ENCODE measurements at regions of chr14 and their contacts with region 1.

Region 1: GRCh38 chr14:22570132-22570949 is 18.7 kb downstream of the DAD1 start:
- DNase-seq: peak; percentile 69 to 99 (median 85)
- ATAC-seq: peak; percentile 87
- H3K4me3 ChIP-seq: peak overlapping the region; percentile 34 to 38
- H3K4me3 Mint-ChIP-seq: peak overlapping the region; percentile 73
- H3K27ac ChIP-seq: peak overlapping the region; percentile 58 to 97
- H3K27ac Mint-ChIP-seq: peak overlapping the region; percentile 97
- H3K4me1 ChIP-seq: peaks cover 51% of the 10 kb centered on the region
- H3K4me1 Mint-ChIP-seq: peaks cover 54% of the 10 kb centered on the region
- H3K27me3 ChIP-seq: no peaks in the 10 kb centered on the region
- H3K27me3 Mint-ChIP-seq: no peaks in the 10 kb centered on the region
- CTCF ChIP-seq: peak; percentile 99

Region 2: GRCh38 chr14:21978184-21978998 is 592.0 kb before region 1 on chr14:
- CTCF ChIA-PET with region 1: interaction called, 11 read pairs
- POLR2A ChIA-PET with region 1: interaction called, 6 read pairs
- intact Hi-C with region 1: no loop called
- DNase-seq: peak in 8 of 9 experiments; percentile 26 to 78 (median 58)
- ATAC-seq: peak; percentile 79
- H3K4me3 ChIP-seq: peak overlapping the region in 1 of 2 experiments; percentile 15
- H3K4me3 Mint-ChIP-seq: peak overlapping the region; percentile 71
- H3K27ac ChIP-seq: no peak overlapping the region
- H3K27ac Mint-ChIP-seq: peak overlapping the region; percentile 72
- H3K4me1 ChIP-seq: peaks cover 3% of the 10 kb centered on the region
- H3K4me1 Mint-ChIP-seq: peaks cover 17% of the 10 kb centered on the region
- H3K27me3 ChIP-seq: no peaks in the 10 kb centered on the region
- H3K27me3 Mint-ChIP-seq: no peaks in the 10 kb centered on the region
- CTCF ChIP-seq: peak; percentile 74

Region 3: DNA sequence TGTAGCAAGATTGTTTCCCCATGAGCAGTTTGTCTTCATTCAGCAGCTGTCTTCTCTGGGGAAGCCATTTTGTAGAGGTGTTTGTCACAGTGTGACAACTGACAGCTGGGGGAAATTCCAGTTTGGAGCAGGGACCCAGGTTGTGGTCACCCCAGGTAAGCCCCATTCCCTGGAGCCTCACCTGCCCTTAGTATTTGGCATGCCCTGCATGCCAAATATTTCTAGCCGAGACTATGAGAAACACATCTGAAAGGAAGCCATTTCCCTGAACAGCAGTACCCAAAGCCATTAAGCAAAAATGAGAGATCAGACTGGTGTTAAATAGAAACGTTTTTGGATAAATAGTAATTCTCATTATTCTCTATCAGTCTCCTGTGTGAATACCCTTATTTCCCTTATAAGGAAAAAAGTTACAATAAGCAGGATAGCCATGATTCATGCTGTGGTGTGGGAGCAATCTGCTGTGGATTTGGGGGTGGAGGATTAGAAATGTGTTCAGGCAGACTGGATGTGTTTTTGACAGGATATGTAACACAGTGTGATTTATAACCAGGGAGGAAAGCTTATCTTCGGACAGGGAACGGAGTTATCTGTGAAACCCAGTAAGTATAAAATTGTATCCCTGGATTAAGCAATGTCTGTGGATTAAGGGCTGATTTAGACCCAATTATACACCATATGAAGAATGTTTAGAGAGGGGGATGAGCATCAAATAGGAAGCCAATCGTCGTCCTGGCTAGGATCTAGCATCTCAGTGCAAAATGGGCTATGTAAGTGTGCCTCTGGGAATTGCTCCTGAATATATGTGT is 50.3 kb before region 1 on chr14:
- CTCF ChIA-PET with region 1: interaction called, 22 read pairs
- POLR2A ChIA-PET with region 1: interaction called, 11 read pairs
- intact Hi-C with region 1: no loop called
- DNase-seq: peak in 2 of 9 experiments; percentile 37 to 57
- ATAC-seq: peak; percentile 21
- H3K4me3 ChIP-seq: peak overlapping the region; percentile 47 to 61
- H3K4me3 Mint-ChIP-seq: peak overlapping the region; percentile 86
- H3K27ac ChIP-seq: peak overlapping the region; percentile 58 to 86
- H3K27ac Mint-ChIP-seq: peak overlapping the region; percentile 99
- H3K4me1 ChIP-seq: peaks cover 94% of the 10 kb centered on the region
- H3K4me1 Mint-ChIP-seq: peaks cover 93% of the 10 kb centered on the region
- H3K27me3 ChIP-seq: no peaks in the 10 kb centered on the region
- H3K27me3 Mint-ChIP-seq: no peaks in the 10 kb centered on the region
- CTCF ChIP-seq: no peak

Region 4: GRCh38 chr14:22589096-22589839 is 18.9 kb after region 1 on chr14 and contains the start of gene DAD1:
- CTCF ChIA-PET with region 1: interaction called, 105 read pairs
- POLR2A ChIA-PET with region 1: interaction called, 32 read pairs
- intact Hi-C with region 1: loop called (anchors 1 kb)
- DNase-seq: peak; percentile 99 to 100 (median 100)
- ATAC-seq: peak; percentile 86
- H3K4me3 ChIP-seq: peak within 1 kb of the TSS; percentile 64 to 67
- H3K4me3 Mint-ChIP-seq: peak within 1 kb of the TSS; percentile 98
- H3K27ac ChIP-seq: peak within 1 kb of the TSS; percentile 95 to 99
- H3K27ac Mint-ChIP-seq: peak within 1 kb of the TSS; percentile 100
- H3K4me1 ChIP-seq: peaks cover 47% of the 10 kb centered on the region
- H3K4me1 Mint-ChIP-seq: peaks cover 49% of the 10 kb centered on the region
- H3K27me3 ChIP-seq: no peaks in the 10 kb centered on the region
- H3K27me3 Mint-ChIP-seq: no peaks in the 10 kb centered on the region
- CTCF ChIP-seq: no peak
- total RNA-seq, gene DAD1: 27.2 to 35.6 TPM

Region 5: DNA sequence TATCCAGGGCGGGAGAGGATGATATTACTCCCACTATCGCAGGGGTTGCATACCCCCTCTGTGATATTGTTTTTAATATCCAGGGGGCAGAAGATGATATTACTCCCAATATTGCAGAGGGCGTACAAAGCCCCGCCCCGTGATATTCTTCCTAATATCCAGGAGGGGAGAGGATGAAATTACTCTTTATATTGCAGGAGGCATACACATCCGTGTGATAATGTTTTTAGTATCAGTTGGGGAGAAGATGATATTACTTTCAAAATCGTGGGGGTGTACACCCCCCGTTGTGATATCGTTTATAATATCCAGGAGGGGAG is 143.2 kb after region 1 on chr14:
- CTCF ChIA-PET with region 1: no interaction called
- POLR2A ChIA-PET with region 1: no interaction called
- intact Hi-C with region 1: loop called (anchors 1 to 5 kb)
- DNase-seq: no peak
- ATAC-seq: no peak
- H3K4me3 ChIP-seq: peak overlapping the region; percentile 7 to 49
- H3K4me3 Mint-ChIP-seq: peak overlapping the region; percentile 85
- H3K27ac ChIP-seq: no peak overlapping the region
- H3K27ac Mint-ChIP-seq: no peak overlapping the region
- H3K4me1 ChIP-seq: peaks cover 9% of the 10 kb centered on the region
- H3K4me1 Mint-ChIP-seq: peaks cover 11% of the 10 kb centered on the region
- H3K27me3 ChIP-seq: peaks cover 0 to 7% of the 10 kb centered on the region in 2 experiments
- H3K27me3 Mint-ChIP-seq: peaks cover 31% of the 10 kb centered on the region
- CTCF ChIP-seq: no peak

Region 6: DNA sequence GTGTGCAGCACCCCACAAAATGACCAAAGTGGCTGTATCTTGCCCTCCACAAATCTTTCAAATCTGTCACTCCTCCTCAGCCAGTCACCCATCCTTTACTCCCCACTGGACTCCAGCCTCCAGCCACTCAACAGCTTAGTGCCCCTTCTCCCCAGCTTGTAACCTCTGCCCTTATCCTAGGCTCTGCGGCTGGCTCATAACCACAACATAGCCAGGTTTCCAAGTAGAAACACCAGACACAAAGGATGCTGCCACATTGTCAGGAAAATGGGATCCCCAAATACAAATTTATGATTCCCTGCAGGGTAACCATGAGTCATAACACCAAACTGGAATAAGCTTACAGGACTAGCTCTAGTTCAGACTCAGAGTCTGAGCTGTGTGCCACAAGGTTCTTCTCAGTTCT is 211.2 kb after region 1 on chr14:
- CTCF ChIA-PET with region 1: no interaction called
- POLR2A ChIA-PET with region 1: no interaction called
- intact Hi-C with region 1: no loop called
- DNase-seq: no peak
- ATAC-seq: no peak
- H3K4me3 ChIP-seq: no peak overlapping the region
- H3K4me3 Mint-ChIP-seq: no peak overlapping the region
- H3K27ac ChIP-seq: no peak overlapping the region
- H3K27ac Mint-ChIP-seq: no peak overlapping the region
- H3K4me1 ChIP-seq: no peaks in the 10 kb centered on the region
- H3K4me1 Mint-ChIP-seq: no peaks in the 10 kb centered on the region
- H3K27me3 ChIP-seq: no peaks in the 10 kb centered on the region
- H3K27me3 Mint-ChIP-seq: no peaks in the 10 kb centered on the region
- CTCF ChIP-seq: no peak

Region 7: DNA sequence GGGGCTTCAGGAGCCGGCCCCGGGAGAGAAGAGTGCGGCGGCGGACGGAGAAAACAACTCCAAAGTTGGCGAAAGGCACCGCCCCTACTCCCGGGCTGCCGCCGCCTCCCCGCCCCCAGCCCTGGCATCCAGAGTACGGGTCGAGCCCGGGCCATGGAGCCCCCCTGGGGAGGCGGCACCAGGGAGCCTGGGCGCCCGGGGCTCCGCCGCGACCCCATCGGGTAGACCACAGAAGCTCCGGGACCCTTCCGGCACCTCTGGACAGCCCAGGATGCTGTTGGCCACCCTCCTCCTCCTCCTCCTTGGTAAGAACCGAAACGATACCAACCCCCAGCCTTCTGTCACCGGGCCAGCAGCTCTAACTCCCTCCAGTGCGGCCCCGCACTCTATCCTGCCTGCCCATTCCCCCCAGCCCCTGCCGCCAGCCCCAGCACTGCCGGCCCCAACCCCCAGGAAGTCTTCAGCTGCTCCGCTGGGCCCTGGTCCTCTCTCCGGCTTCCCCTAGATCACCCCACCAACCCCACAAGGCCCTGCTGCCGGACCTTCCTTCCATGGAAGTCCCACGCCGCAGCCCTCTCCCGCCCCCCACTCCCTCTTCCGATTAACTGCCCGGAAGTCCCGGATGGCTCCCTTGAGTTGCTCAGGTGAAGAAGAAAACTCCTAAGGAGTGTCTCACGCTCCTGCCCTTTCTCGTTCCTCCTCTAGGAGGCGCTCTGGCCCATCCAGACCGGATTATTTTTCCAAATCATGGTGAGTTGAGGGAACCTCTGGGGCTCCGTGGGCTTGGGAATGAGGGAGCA is 301.9 kb after region 1 on chr14:
- CTCF ChIA-PET with region 1: interaction called, 16 read pairs
- POLR2A ChIA-PET with region 1: interaction called, 7 read pairs
- intact Hi-C with region 1: no loop called
- DNase-seq: peak; percentile 47 to 82 (median 73)
- ATAC-seq: peak; percentile 46
- H3K4me3 ChIP-seq: peak overlapping the region; percentile 82 to 83
- H3K4me3 Mint-ChIP-seq: peak overlapping the region; percentile 91
- H3K27ac ChIP-seq: peak overlapping the region; percentile 85 to 94
- H3K27ac Mint-ChIP-seq: peak overlapping the region; percentile 99
- H3K4me1 ChIP-seq: peaks cover 28% of the 10 kb centered on the region
- H3K4me1 Mint-ChIP-seq: peaks cover 36% of the 10 kb centered on the region
- H3K27me3 ChIP-seq: no peaks in the 10 kb centered on the region
- H3K27me3 Mint-ChIP-seq: no peaks in the 10 kb centered on the region
- CTCF ChIP-seq: peak; percentile 86

Region 8: DNA sequence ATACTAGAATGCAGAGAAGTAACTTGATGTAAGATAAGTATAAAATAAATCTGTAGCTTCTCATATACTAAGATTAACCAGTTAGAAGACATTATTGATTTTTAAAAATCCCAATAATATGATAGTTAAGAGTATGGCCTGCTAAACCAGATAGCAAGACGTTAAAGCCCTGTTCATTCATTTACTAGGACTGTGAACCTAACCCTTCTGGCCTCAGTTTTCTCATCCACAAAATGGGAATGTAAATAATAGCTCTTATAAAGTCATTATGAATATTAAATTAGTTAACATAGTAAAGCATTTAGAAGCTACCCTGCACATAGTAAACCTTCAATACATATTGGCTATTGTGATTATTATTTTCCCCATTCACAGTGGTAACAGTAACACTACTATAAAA is 364.8 kb after region 1 on chr14:
- CTCF ChIA-PET with region 1: no interaction called
- POLR2A ChIA-PET with region 1: no interaction called
- intact Hi-C with region 1: no loop called
- DNase-seq: no peak
- ATAC-seq: no peak
- H3K4me3 ChIP-seq: no peak overlapping the region
- H3K4me3 Mint-ChIP-seq: no peak overlapping the region
- H3K27ac ChIP-seq: no peak overlapping the region
- H3K27ac Mint-ChIP-seq: no peak overlapping the region
- H3K4me1 ChIP-seq: no peaks in the 10 kb centered on the region
- H3K4me1 Mint-ChIP-seq: peaks cover 15% of the 10 kb centered on the region
- H3K27me3 ChIP-seq: no peaks in the 10 kb centered on the region
- H3K27me3 Mint-ChIP-seq: no peaks in the 10 kb centered on the region
- CTCF ChIP-seq: no peak

Measured in CD8-positive, alpha-beta T cell (primary cell).